ENCODE measurements at regions of chr2 and their contacts with region 1.

Region 1: DNA sequence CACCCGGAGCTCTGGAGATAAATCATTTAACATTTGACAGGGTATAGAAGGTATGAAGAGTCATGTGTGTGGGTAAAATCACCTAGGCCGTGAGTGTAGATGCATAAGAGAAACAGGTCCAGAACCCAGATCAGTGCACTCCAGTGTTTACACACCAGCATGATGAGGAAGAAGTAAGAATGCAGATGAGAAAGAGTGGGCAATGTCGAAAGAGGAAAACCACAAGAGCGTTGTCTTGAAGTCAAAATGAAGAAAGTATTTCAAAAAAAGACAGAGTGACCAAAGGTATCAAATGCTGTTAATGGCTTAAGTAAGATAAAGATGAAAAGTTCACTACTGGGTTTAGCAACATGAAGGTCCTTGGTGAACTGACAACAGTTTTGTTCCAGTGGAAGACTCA is 32.0 kb upstream of the PLB1 start:
- DNase-seq: no peak
- H3K4me3 Mint-ChIP-seq: no peak overlapping the region
- H3K27ac Mint-ChIP-seq: peak overlapping the region; percentile 38
- H3K4me1 Mint-ChIP-seq: peaks cover 42% of the 10 kb centered on the region
- H3K27me3 Mint-ChIP-seq: peaks cover 2% of the 10 kb centered on the region

Region 2: DNA sequence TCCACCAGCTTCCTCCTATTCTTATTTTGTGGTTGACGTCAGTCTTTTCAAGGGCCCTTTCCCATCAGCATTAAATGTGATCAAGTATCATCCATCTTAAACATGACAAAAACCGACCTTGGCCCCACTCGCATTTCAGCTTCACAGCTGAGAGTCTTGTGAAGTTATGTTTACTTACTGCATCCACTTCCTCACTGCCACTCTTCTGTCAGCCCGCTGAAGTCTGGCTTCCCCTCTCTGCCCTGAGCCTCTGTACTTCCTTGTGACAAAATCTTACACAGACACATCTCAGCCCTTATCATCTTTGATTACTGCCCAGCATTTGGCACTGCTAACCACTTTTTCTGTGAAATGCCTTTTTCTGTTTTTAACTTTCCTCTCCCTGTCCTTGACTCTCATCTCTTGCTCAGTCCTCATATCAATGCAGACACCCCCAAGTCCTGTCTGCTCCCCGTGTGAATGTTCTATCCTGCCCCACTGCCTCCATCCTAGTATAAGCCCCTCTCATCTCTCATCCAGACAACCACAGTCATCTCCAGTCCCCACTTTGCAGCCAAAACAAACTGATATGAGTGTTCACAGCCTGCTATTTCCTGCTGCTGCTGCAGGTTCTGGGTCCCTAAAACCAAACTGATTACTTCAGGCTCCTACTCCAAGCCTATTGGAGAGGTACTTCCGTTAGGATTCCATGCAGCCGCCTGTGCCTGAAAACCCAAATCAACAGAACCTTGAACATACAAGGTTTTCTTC is 39.9 kb before region 1 on chr2:
- intact Hi-C with region 1: loop called (anchors 1 kb)
- DNase-seq: peak; percentile 33
- H3K4me3 Mint-ChIP-seq: peak overlapping the region; percentile 54
- H3K27ac Mint-ChIP-seq: peak overlapping the region; percentile 74
- H3K4me1 Mint-ChIP-seq: peaks cover 52% of the 10 kb centered on the region
- H3K27me3 Mint-ChIP-seq: no peaks in the 10 kb centered on the region

Region 3: DNA sequence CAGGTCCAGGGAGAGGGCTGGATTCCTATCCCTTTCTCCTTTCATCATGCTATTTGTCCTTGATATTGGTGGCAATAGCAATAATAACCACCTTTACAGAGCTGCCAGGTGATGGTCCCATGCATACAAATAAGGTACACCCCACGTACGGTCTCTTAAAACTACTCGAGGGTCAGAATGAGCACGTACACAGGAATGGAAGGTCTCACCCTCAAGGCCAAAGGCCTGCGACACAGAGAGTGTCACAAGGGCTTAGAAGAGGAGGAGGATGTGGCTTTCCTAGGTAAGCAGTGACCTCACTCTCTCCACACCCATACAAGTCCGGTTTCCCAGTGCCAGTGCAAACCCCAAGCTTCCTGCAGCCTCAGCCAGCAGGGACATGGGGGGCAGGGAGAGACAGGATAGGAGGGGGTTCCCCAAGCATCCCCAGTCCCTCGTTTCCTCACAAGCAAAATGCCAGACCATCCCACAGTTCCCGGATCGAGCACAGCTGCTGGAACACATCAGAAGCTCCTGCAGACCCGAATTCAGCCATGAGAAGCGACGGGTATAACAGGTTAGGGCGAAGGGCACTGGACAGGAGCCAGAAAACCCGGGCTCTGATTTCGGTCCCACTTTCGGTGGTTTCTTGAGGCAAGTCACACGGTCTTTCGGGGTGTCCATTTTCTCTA is 81.2 kb after region 1 on chr2:
- intact Hi-C with region 1: loop called (anchors 2 kb)
- DNase-seq: peak; percentile 27
- H3K4me3 Mint-ChIP-seq: peak overlapping the region; percentile 44
- H3K27ac Mint-ChIP-seq: peak overlapping the region; percentile 86
- H3K4me1 Mint-ChIP-seq: peaks cover 34% of the 10 kb centered on the region
- H3K27me3 Mint-ChIP-seq: no peaks in the 10 kb centered on the region

Measured in activated T-helper 2 cell treated with anti-CD3 and anti-CD28 coated beads, Interferon-gamma antibody, Interleukin-2, Interleukin-4, amounts not matched to agents 10 μg/mL and 5 μg/mL and 100 μg/mL, durations not matched to agents 14 hours and 24 hours and 36 hours (primary cell).